GM12878 (cell line): ENCODE measurements at regions of chr17 and their contacts with region 1.

Region 1: DNA sequence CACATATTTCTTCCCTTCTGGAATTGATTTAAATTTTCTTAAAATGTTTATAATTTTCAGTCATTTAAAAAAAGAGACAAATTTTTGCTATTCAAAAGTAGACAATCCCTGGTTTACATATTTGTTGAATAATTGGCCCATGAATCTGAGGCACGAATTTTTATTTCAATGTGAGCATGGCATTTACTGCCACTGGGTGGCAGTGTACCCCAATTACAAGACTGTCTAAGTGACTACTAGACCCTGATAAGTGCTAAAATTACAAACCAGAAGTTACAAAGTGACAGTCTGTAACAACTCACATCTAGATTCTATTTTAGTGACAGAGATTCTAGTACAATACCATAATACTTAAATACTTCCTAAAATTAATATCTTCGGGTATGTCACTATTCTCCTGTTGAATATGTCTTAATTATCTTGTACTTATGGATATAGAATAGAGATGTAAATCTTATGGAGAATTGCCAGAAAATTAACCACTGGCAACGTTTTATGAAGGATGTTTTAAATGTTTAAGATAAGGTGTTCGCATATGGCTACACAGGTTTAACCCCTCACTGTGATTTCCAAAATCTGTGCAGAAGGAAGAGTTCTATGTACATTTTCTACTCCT is 235.8 kb downstream of the MAP2K4 start:
- DNase-seq: peak; percentile 3
- ATAC-seq: peak; percentile 76
- H3K4me3 ChIP-seq: no peak overlapping the region
- H3K27ac ChIP-seq: no peak overlapping the region
- H3K4me1 ChIP-seq: no peaks in the 10 kb centered on the region
- H3K27me3 ChIP-seq: no peaks in the 10 kb centered on the region
- CTCF ChIP-seq: peak; percentile 62 to 75 (median 69)
- EP300 ChIP-seq: no peak
- POLR2A ChIP-seq: no peak
- RAD21 ChIP-seq: peak; percentile 82

Region 2: GRCh38 chr17:12180644-12181261 is 75.7 kb before region 1 on chr17:
- CTCF ChIA-PET with region 1: interaction called, 7 read pairs
- POLR2A ChIA-PET with region 1: no interaction called
- RAD21 ChIA-PET with region 1: no interaction called
- SMC1A ChIA-PET with region 1: interaction called, 3 read pairs
- in situ Hi-C with region 1: no loop called
- intact Hi-C with region 1: loop called (anchors 5 kb)
- DNase-seq: peak; percentile 0
- ATAC-seq: peak; percentile 68
- H3K4me3 ChIP-seq: no peak overlapping the region
- H3K27ac ChIP-seq: no peak overlapping the region
- H3K4me1 ChIP-seq: no peaks in the 10 kb centered on the region
- H3K27me3 ChIP-seq: no peaks in the 10 kb centered on the region
- CTCF ChIP-seq: peak; percentile 58 to 81 (median 74); a peak in 5 of 6 replicates
- EP300 ChIP-seq: no peak
- POLR2A ChIP-seq: no peak
- RAD21 ChIP-seq: peak; percentile 88

Region 3: GRCh38 chr17:12230481-12231354 is 25.8 kb before region 1 on chr17:
- CTCF ChIA-PET with region 1: no interaction called
- POLR2A ChIA-PET with region 1: no interaction called
- RAD21 ChIA-PET with region 1: no interaction called
- SMC1A ChIA-PET with region 1: no interaction called
- in situ Hi-C with region 1: no loop called
- intact Hi-C with region 1: no loop called
- DNase-seq: no peak
- ATAC-seq: no peak
- H3K4me3 ChIP-seq: no peak overlapping the region
- H3K27ac ChIP-seq: no peak overlapping the region
- H3K4me1 ChIP-seq: no peaks in the 10 kb centered on the region
- H3K27me3 ChIP-seq: no peaks in the 10 kb centered on the region
- CTCF ChIP-seq: no peak
- EP300 ChIP-seq: no peak
- POLR2A ChIP-seq: no peak
- RAD21 ChIP-seq: no peak

Region 4: GRCh38 chr17:12395733-12396354 is 139.4 kb after region 1 on chr17:
- CTCF ChIA-PET with region 1: no interaction called
- POLR2A ChIA-PET with region 1: no interaction called
- RAD21 ChIA-PET with region 1: no interaction called
- SMC1A ChIA-PET with region 1: no interaction called
- in situ Hi-C with region 1: no loop called
- intact Hi-C with region 1: loop called (anchors 10 kb)
- DNase-seq: no peak
- ATAC-seq: peak; percentile 63
- H3K4me3 ChIP-seq: no peak overlapping the region
- H3K27ac ChIP-seq: no peak overlapping the region
- H3K4me1 ChIP-seq: no peaks in the 10 kb centered on the region
- H3K27me3 ChIP-seq: no peaks in the 10 kb centered on the region
- CTCF ChIP-seq: peak; percentile 47 to 63 (median 60)
- EP300 ChIP-seq: no peak
- POLR2A ChIP-seq: no peak
- RAD21 ChIP-seq: peak; percentile 48; the same call in 1 of the 2 replicates

Region 5: GRCh38 chr17:12522743-12523183 is 266.3 kb after region 1 on chr17:
- CTCF ChIA-PET with region 1: no interaction called
- POLR2A ChIA-PET with region 1: no interaction called
- RAD21 ChIA-PET with region 1: no interaction called
- SMC1A ChIA-PET with region 1: no interaction called
- in situ Hi-C with region 1: no loop called
- intact Hi-C with region 1: loop called (anchors 10 kb)
- DNase-seq: no peak
- ATAC-seq: no peak
- H3K4me3 ChIP-seq: no peak overlapping the region
- H3K27ac ChIP-seq: no peak overlapping the region
- H3K4me1 ChIP-seq: no peaks in the 10 kb centered on the region
- H3K27me3 ChIP-seq: no peaks in the 10 kb centered on the region
- CTCF ChIP-seq: no peak
- EP300 ChIP-seq: no peak
- POLR2A ChIP-seq: no peak
- RAD21 ChIP-seq: no peak

Region 6: DNA sequence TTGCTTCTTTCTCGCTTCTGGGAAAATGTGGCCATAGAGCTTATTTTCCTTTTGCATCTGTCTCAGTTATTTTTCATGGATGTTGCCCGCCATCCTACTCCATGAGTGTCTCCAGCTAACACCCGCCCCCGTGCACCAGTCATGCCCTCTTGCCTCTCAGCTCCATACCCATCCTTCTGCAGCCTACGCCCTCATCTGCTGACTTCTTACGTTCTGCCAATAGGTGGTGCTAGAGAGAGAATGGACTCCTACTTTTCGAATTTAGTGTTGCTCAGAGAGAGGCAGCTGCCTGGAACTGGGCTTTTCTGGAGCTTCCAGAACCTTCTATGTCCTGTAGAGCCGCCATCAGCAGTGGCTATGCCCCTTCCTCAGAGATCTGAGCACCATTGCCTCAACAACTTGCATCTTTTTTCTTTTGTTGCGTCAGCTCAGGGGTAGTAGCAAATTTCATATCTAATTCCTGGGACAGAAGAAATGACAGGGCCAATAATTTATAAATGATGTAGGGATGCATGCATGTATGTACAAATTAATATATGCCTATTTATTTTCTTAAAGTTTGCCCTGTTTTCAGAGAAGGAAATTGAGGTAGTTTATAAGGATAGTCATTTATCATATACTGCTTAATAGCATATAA is 289.5 kb after region 1 on chr17:
- CTCF ChIA-PET with region 1: interaction called, 14 read pairs
- POLR2A ChIA-PET with region 1: no interaction called
- RAD21 ChIA-PET with region 1: no interaction called
- SMC1A ChIA-PET with region 1: interaction called, 4 read pairs
- in situ Hi-C with region 1: no loop called
- intact Hi-C with region 1: no loop called
- DNase-seq: no peak
- ATAC-seq: peak; percentile 84
- H3K4me3 ChIP-seq: no peak overlapping the region
- H3K27ac ChIP-seq: no peak overlapping the region
- H3K4me1 ChIP-seq: no peaks in the 10 kb centered on the region
- H3K27me3 ChIP-seq: no peaks in the 10 kb centered on the region
- CTCF ChIP-seq: peak; percentile 63 to 71 (median 70)
- EP300 ChIP-seq: no peak
- POLR2A ChIP-seq: no peak
- RAD21 ChIP-seq: peak; percentile 62

Region 7: DNA sequence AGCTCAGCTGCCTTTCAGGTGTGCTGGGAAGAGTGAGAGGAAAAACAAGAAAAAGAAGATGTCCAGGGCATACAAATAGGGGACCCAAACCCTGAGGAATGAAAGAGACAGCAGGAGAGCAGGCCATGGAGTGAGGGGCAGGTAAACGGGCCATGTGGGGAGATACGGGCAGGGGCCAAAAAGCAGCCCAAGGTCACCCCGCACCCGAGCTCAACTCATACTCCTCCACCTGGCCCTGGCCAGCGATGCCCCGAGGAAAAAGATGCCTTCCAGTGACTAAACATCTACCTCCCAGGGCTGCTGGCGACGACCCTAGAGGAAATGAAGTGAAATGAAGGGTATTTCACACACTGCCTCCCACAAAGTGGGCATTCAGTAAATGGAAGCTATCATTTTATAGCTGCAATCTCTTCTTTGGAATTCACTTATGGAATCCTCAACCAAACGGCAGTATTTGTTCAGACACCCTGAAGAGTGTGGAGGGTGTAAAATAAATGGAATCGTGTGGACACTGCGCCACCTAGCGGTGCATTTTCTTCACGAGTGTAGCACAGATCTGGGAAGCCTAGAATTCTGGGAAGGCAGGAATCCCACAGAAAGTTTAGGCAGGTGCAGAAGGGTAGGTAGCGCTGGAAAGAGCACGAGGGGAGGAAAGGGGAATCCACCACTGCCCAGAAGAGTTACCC is 746.4 kb after region 1 on chr17:
- CTCF ChIA-PET with region 1: interaction called, 5 read pairs
- POLR2A ChIA-PET with region 1: no interaction called
- RAD21 ChIA-PET with region 1: no interaction called
- SMC1A ChIA-PET with region 1: interaction called, 8 read pairs
- in situ Hi-C with region 1: no loop called
- intact Hi-C with region 1: loop called (anchors 1 kb)
- DNase-seq: no peak
- ATAC-seq: peak; percentile 90
- H3K4me3 ChIP-seq: no peak overlapping the region
- H3K27ac ChIP-seq: no peak overlapping the region
- H3K4me1 ChIP-seq: no peaks in the 10 kb centered on the region
- H3K27me3 ChIP-seq: no peaks in the 10 kb centered on the region
- CTCF ChIP-seq: peak; percentile 72 to 84 (median 80)
- EP300 ChIP-seq: no peak
- POLR2A ChIP-seq: no peak
- RAD21 ChIP-seq: peak; percentile 90